ENCODE measurements at regions of chr10 and their contacts with region 1.

Region 1: GRCh38 chr10:784403-785088 is 95.1 kb upstream of the DIP2C start:
- DNase-seq: peak; percentile 17 to 68
- H3K4me3 ChIP-seq: peak overlapping the region; percentile 27
- H3K4me1 ChIP-seq: peaks cover 3% of the 10 kb centered on the region; the same call in 1 of the 2 replicates
- H3K27me3 ChIP-seq: no peaks in the 10 kb centered on the region

Region 2: GRCh38 chr10:511101-511848 is 273.3 kb before region 1 on chr10:
- in situ Hi-C with region 1: loop called (anchors 25 kb)
- DNase-seq: peak; percentile 82 to 97
- H3K4me3 ChIP-seq: no peak overlapping the region
- H3K4me1 ChIP-seq: peaks cover 7% of the 10 kb centered on the region
- H3K27me3 ChIP-seq: no peaks in the 10 kb centered on the region

Region 3: DNA sequence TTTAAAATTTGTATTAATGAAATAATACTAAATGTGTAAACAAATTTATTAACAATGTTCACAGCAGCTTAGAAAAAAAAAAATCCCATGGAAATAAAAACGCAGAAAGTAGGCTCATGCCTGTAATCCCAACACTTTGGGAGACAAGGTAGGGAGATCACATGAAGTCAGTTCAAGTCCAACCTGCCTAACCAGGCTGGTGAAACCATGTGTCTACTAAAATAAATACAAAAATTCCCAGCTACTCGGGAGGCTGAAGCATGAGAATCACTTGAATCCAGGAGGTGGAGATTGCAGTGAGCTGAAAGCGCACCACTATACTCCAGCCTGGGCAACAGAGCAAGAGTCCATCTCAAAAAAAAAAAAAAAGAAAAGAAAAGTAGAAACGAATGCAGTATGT is 110.8 kb after region 1 on chr10:
- in situ Hi-C with region 1: no loop called
- DNase-seq: no peak
- H3K4me3 ChIP-seq: no peak overlapping the region
- H3K4me1 ChIP-seq: no peaks in the 10 kb centered on the region
- H3K27me3 ChIP-seq: no peaks in the 10 kb centered on the region